CD4-positive, alpha-beta T cell (primary cell): ENCODE measurements at regions of chr7 and their contacts with region 1.

Region 1: DNA sequence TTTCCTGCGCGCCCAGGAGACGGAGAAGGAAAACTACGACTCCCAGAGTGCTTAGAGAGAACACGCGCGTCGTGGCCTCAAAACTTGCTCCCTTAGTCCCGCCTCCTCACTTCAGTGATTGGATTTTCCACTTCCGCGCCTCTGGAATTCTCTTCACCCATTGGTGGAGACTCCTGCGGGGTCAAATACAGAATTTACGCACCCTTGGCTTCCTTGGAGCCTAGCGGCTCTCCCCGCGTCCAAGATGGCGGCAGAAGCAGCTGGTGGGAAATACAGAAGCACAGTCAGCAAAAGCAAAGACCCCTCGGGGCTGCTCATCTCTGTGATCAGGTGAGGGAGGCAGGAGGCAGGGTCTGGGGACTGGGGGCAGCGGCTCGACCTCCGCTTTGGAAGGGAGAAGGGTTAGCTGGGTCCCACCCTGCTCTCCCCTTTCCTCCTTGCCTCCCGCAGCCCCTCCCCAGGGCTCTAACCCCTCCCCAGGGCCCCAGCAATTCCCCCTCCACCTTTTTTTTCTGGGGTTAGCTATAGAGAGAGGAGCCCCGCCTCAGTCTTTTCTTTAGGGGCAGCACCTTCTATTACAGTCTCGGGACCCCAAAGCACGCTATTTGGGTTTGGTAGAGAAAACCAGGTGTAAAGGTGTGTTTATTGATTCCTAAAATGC is at the start of gene EXOC4:
- DNase-seq: peak; percentile 80 to 99 (median 87)
- ATAC-seq: peak; percentile 99
- H3K4me3 ChIP-seq: peak within 1 kb of the TSS; percentile 85
- H3K4me3 Mint-ChIP-seq: peak within 1 kb of the TSS; percentile 97
- H3K27ac ChIP-seq: peak within 1 kb of the TSS; percentile 36 to 77
- H3K27ac Mint-ChIP-seq: peak within 1 kb of the TSS; percentile 94
- H3K4me1 ChIP-seq: peaks cover 8% of the 10 kb centered on the region
- H3K4me1 Mint-ChIP-seq: peaks cover 50% of the 10 kb centered on the region
- H3K27me3 ChIP-seq: no peaks in the 10 kb centered on the region
- H3K27me3 Mint-ChIP-seq: no peaks in the 10 kb centered on the region
- CTCF ChIP-seq: no peak
- total RNA-seq, gene EXOC4: 58.0 to 59.9 TPM

Region 2: GRCh38 chr7:134316539-134317344 is 1063.8 kb after region 1 on chr7 and contains the start of gene SLC35B4:
- CTCF ChIA-PET with region 1: no interaction called
- POLR2A ChIA-PET with region 1: no interaction called
- intact Hi-C with region 1: loop called (anchors 2 to 10 kb)
- DNase-seq: peak; percentile 90 to 97 (median 92)
- ATAC-seq: peak; percentile 96
- H3K4me3 ChIP-seq: peak within 1 kb of the TSS; percentile 98
- H3K4me3 Mint-ChIP-seq: peak within 1 kb of the TSS; percentile 93
- H3K27ac ChIP-seq: peak within 1 kb of the TSS; percentile 36 to 65
- H3K27ac Mint-ChIP-seq: peak within 1 kb of the TSS; percentile 77
- H3K4me1 ChIP-seq: peaks cover 15% of the 10 kb centered on the region
- H3K4me1 Mint-ChIP-seq: peaks cover 26% of the 10 kb centered on the region
- H3K27me3 ChIP-seq: no peaks in the 10 kb centered on the region
- H3K27me3 Mint-ChIP-seq: no peaks in the 10 kb centered on the region
- CTCF ChIP-seq: peak; percentile 27
- total RNA-seq, gene SLC35B4: 5.8 to 7.8 TPM